GM23248 (cell line): ENCODE measurements at regions of chr12 and their contacts with region 1.

Region 1: DNA sequence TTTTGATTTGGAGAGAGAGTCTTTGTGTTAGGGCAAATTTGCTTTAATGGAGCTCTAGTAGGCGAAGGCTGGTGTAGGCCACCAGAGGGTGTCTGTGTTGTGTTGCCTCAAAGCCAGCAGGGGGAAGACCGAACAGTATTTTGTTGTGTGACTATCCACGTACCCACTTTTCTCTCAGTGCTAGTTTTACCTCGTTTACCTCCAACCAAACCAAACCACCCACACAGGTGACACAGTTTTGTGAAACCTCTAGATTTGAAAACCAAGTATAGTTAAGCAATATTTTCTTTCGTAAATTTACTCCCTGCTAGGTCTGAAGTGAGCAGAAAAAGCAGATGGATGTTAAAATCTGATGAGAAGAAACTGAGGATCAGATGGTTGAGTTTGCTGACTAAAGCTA is 36.3 kb upstream of the NPFF start:
- DNase-seq: peak; percentile 89
- H3K4me3 ChIP-seq: no peak overlapping the region
- H3K27ac ChIP-seq: peak overlapping the region; percentile 61
- H3K4me1 ChIP-seq: peaks cover 4% of the 10 kb centered on the region; the same call in 1 of the 2 replicates
- H3K27me3 ChIP-seq: no peaks in the 10 kb centered on the region

Region 2: DNA sequence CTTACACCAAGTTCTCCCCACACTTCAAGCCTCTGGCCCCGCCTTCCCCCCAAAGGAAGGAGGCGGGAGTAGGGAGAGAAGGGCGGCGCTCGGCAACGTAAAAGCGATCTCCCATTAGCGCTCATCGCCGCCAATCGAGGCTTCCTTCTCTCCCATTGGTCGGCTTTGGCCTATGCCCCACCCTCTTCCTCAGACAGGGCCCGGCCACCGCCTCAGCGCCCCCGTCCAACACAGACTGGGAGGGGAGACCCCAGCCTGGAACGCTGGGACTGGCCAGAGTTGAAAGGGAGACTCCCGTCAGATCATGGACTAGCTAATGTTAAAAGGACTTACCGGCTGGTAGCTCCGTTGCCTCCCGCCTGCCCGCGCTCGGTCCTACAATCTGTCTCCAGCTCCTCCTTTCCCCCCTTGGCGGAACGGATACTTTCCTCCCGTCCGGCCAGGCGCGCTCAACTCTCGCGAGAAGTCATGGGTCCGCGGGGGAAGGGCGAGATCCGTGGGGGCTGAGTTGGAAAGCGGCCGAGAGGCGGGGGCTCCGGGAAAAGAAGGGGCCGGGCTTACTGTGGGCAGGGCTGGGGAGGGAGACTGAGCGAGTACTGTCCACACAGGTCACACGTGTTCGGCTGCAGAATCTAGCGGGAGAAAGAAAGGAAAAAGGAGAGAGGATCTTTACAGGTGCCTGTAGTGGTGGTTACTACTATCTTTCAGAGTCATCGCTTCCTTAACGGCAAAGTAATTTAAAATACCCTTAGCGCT is 82.6 kb after region 1 on chr12 and contains the start of gene ATF7:
- in situ Hi-C with region 1: no loop called
- DNase-seq: peak; percentile 99
- H3K4me3 ChIP-seq: peak within 1 kb of the TSS; percentile 94
- H3K27ac ChIP-seq: peak within 1 kb of the TSS; percentile 84
- H3K4me1 ChIP-seq: peaks cover 23% of the 10 kb centered on the region
- H3K27me3 ChIP-seq: no peaks in the 10 kb centered on the region
- total RNA-seq, gene ATF7: 10.5 and 12.8 TPM in 2 replicates

Region 3: DNA sequence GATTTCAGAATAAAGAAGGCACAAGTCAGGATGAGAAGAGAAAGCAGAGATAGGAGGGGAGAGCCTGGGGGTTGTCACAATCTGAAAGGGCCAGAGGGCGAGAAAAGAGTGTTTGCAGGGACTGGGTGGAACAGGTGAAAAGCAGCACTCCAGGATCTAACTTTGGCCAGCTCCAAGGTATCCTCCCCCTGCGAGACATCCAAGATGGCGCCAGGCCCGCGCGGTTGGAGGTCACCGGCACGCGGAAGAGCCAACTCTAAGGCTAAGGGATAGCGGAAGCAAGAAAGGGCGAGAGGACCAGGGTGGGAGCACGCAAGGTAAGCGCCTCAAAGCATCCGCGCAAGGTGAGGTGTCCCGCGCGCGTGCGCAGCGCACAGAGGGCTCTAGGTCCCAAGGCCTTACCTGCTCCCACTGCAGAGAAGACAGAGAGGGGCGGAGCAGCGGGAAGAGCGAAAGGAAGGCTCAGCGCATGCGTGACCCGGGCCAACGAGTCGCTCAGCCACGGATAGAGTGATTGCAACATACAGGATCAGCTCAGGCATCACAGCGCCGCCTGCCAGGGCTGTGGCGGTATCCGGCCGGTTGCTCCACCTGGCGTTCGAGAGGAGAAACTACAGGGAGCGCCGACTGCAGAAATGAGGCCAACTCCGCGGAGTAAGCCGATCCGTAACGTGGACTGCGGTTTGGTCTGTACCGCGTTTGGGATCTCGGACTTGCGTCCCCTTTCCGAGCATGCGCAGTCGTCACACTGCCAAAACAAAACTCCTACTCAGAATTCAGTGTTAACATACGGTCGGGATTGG is 132.3 kb after region 1 on chr12 and contains the start of gene ATP5MC2:
- in situ Hi-C with region 1: loop called (anchors 5 kb)
- DNase-seq: peak; percentile 98
- H3K4me3 ChIP-seq: peak within 1 kb of the TSS; percentile 92
- H3K27ac ChIP-seq: peak within 1 kb of the TSS; percentile 82
- H3K4me1 ChIP-seq: peaks cover 36% of the 10 kb centered on the region
- H3K27me3 ChIP-seq: no peaks in the 10 kb centered on the region
- total RNA-seq, gene ATP5MC2: 191 and 257 TPM in 2 replicates